PC-9 (cell line): ENCODE measurements at regions of chr1 and their contacts with region 1.

Region 1: GRCh38 chr1:155978325-155978972 is at the start of gene ARHGEF2:
- DNase-seq: peak; percentile 64 to 70
- H3K4me3 ChIP-seq: peak within 1 kb of the TSS; percentile 93
- H3K27ac ChIP-seq: peak within 1 kb of the TSS; percentile 96
- H3K4me1 ChIP-seq: peaks cover 53% of the 10 kb centered on the region
- H3K27me3 ChIP-seq: no peaks in the 10 kb centered on the region
- CTCF ChIP-seq: no peak; the same call in 1 of the 2 replicates
- total RNA-seq, gene ARHGEF2: 85.0 and 93.9 TPM in 2 replicates

Region 2: DNA sequence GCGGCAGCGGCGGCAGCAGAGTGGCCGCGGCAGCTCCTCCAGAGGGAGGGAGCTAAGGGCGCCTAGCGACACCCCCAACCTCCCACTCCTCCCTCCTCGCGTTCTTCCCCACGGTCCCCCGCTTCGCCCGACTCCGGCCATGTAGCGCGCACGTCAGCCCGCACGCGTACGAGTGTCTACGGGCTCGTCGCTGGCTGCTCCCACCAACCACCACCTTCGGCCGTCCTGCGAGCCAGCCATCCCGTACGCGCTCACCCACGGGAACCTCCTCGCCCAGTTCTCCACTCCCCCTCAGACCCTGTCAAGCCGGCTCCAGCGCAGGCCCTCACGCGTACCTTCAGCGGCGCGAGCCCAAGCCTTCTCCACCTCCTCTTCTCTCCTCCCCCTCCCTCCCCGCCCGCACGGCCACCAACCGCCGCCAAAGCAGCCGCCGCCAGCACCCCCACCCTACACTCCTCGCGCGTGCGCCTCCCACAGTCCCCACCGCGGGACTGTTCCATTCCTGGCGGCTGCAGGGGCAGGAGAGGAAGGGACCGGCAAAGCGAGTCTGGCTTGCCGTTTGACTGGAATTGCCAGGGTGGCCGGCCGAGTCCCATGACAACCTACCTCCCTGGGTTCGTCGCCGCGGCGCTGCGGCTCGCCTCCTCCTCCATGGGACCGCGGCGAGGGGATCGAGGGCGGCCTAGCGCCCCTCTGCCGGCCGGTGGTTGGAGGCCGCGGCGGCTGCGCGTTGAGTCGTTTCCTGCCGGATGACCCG is 289.9 kb before region 1 on chr1 and contains the start of gene YY1AP1:
- CTCF ChIA-PET with region 1: interaction called, 10 read pairs
- POLR2A ChIA-PET with region 1: no interaction called
- intact Hi-C with region 1: no loop called
- DNase-seq: peak; percentile 59 to 91
- H3K4me3 ChIP-seq: peak within 1 kb of the TSS; percentile 88
- H3K27ac ChIP-seq: peak within 1 kb of the TSS; percentile 94
- H3K4me1 ChIP-seq: peaks cover 16% of the 10 kb centered on the region
- H3K27me3 ChIP-seq: no peaks in the 10 kb centered on the region
- CTCF ChIP-seq: no peak
- total RNA-seq, gene YY1AP1: 38.3 and 40.6 TPM in 2 replicates

Region 3: GRCh38 chr1:155961937-155962336 is 16.5 kb before region 1 on chr1:
- CTCF ChIA-PET with region 1: interaction called, 5 read pairs
- POLR2A ChIA-PET with region 1: interaction called, 25 read pairs
- intact Hi-C with region 1: loop called (anchors 1 kb)
- DNase-seq: peak; percentile 98 to 99
- H3K4me3 ChIP-seq: no peak overlapping the region
- H3K27ac ChIP-seq: peak overlapping the region; percentile 99
- H3K4me1 ChIP-seq: peaks cover 38% of the 10 kb centered on the region
- H3K27me3 ChIP-seq: no peaks in the 10 kb centered on the region
- CTCF ChIP-seq: no peak; the same call in 1 of the 2 replicates

Region 4: GRCh38 chr1:156268336-156268735 is 289.9 kb after region 1 on chr1:
- CTCF ChIA-PET with region 1: no interaction called
- POLR2A ChIA-PET with region 1: interaction called, 12 read pairs
- intact Hi-C with region 1: no loop called
- DNase-seq: no peak
- H3K4me3 ChIP-seq: no peak overlapping the region
- H3K27ac ChIP-seq: no peak overlapping the region
- H3K4me1 ChIP-seq: no peaks in the 10 kb centered on the region
- H3K27me3 ChIP-seq: no peaks in the 10 kb centered on the region
- CTCF ChIP-seq: no peak

Region 5: GRCh38 chr1:156282479-156283222 is 304.2 kb after region 1 on chr1 and contains the start of gene SMG5:
- CTCF ChIA-PET with region 1: no interaction called
- POLR2A ChIA-PET with region 1: interaction called, 3 read pairs
- intact Hi-C with region 1: loop called (anchors 5 kb)
- DNase-seq: peak; percentile 93 to 95
- H3K4me3 ChIP-seq: peak within 1 kb of the TSS; percentile 97
- H3K27ac ChIP-seq: peak within 1 kb of the TSS; percentile 85
- H3K4me1 ChIP-seq: peaks cover 30% of the 10 kb centered on the region
- H3K27me3 ChIP-seq: no peaks in the 10 kb centered on the region
- CTCF ChIP-seq: no peak
- total RNA-seq, gene SMG5: 63.3 and 66.2 TPM in 2 replicates